Ascending aorta (tissue), 2 donors: ENCODE measurements at regions of chr16 and their contacts with region 1.

Region 1: DNA sequence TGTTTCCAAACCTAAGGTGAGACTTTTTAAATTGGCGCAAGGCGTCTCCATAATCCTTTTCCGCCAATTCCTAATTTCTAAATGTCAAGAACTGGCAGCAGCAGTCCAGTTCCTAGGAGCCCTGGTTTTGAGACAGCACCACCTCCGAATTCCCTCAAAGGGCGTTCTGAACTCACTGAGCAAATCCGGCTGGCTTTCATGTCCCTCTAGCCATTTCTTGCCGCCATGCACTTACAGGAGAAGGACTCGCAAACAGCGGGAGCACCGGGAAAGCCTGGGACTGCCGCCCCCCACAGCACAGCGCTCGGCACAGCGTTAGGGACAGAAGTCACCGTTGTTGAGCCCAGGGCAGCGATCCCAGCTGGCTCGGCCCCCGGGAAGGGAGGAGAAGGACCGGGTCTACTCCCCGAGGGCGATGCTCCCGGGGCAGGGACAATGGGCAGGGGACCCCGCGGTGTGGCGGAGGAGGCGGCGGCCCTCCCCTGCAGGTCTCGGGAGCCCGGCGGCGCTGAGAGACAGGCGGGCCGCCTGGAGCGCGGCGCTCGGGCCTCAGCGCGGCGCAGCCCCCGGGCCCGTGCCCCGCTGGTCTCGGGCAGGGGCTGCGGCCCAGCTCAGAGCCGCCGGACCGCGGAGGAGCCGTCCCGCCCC is 545 bp downstream of the ARHGAP17 start:
- DNase-seq: peak in 1 of 2 donors; percentile 71
- H3K4me3 ChIP-seq: peak overlapping the region; percentile 71 to 94
- H3K27ac ChIP-seq: peak overlapping the region; percentile 95 to 96
- H3K4me1 ChIP-seq: peaks cover 8 to 31% of the 10 kb centered on the region in 2 donors
- H3K27me3 ChIP-seq: no peaks in the 10 kb centered on the region
- CTCF ChIP-seq: no peak

Region 2: GRCh38 chr16:24539291-24539849 is 475.3 kb before region 1 on chr16 and contains the start of gene RBBP6:
- intact Hi-C with region 1: loop called (anchors 10 kb)
- DNase-seq: peak; percentile 84 to 97
- H3K4me3 ChIP-seq: peak within 1 kb of the TSS; percentile 80 to 100
- H3K27ac ChIP-seq: peak within 1 kb of the TSS; percentile 98 to 100
- H3K4me1 ChIP-seq: peaks cover 0 to 14% of the 10 kb centered on the region in 2 donors
- H3K27me3 ChIP-seq: no peaks in the 10 kb centered on the region
- CTCF ChIP-seq: peak; percentile 24 to 46 (median 30)
- total RNA-seq, gene RBBP6: 96.1 TPM

Region 3: GRCh38 chr16:24975428-24975889 is 39.2 kb before region 1 on chr16:
- intact Hi-C with region 1: loop called (anchors 5 kb)
- DNase-seq: peak in 1 of 2 donors; percentile 11
- H3K4me3 ChIP-seq: no peak overlapping the region
- H3K27ac ChIP-seq: peak overlapping the region in 1 of 2 donors; percentile 29
- H3K4me1 ChIP-seq: peaks cover 13 to 33% of the 10 kb centered on the region in 2 donors
- H3K27me3 ChIP-seq: no peaks in the 10 kb centered on the region
- CTCF ChIP-seq: no peak

Region 4: GRCh38 chr16:24993722-24994686 is 20.6 kb before region 1 on chr16:
- intact Hi-C with region 1: loop called (anchors 1 kb)
- DNase-seq: peak in 1 of 2 donors; percentile 68
- H3K4me3 ChIP-seq: peak overlapping the region in 1 of 2 donors; percentile 44
- H3K27ac ChIP-seq: peak overlapping the region; percentile 61 to 75
- H3K4me1 ChIP-seq: peaks cover 19 to 62% of the 10 kb centered on the region in 2 donors
- H3K27me3 ChIP-seq: no peaks in the 10 kb centered on the region
- CTCF ChIP-seq: no peak

Region 5: GRCh38 chr16:25051406-25052150 is 37.0 kb after region 1 on chr16:
- intact Hi-C with region 1: no loop called
- DNase-seq: no peak
- H3K4me3 ChIP-seq: peak overlapping the region; percentile 33 to 38
- H3K27ac ChIP-seq: peak overlapping the region; percentile 61 to 67
- H3K4me1 ChIP-seq: peaks cover 0 to 24% of the 10 kb centered on the region in 2 donors
- H3K27me3 ChIP-seq: no peaks in the 10 kb centered on the region
- CTCF ChIP-seq: no peak

Region 6: GRCh38 chr16:25066747-25067631 is 52.4 kb after region 1 on chr16:
- intact Hi-C with region 1: loop called (anchors 2 kb)
- DNase-seq: peak; percentile 20 to 89
- H3K4me3 ChIP-seq: peak overlapping the region; percentile 74 to 78
- H3K27ac ChIP-seq: peak overlapping the region; percentile 87 to 97
- H3K4me1 ChIP-seq: peaks cover 0 to 8% of the 10 kb centered on the region in 2 donors
- H3K27me3 ChIP-seq: no peaks in the 10 kb centered on the region
- CTCF ChIP-seq: peak in 1 of 3 experiments; percentile 5